Activated CD8-positive, alpha-beta T cell treated with anti-CD3 and anti-CD28 coated beads for 36 hours (primary cell): ENCODE measurements at regions of chr16 and their contacts with region 1.

Region 1: GRCh38 chr16:2752035-2752849 is at the start of gene SRRM2:
- DNase-seq: peak; percentile 97
- ATAC-seq: peak; percentile 90
- H3K4me3 Mint-ChIP-seq: peak within 1 kb of the TSS; percentile 99
- H3K27ac Mint-ChIP-seq: peak within 1 kb of the TSS; percentile 99
- H3K4me1 Mint-ChIP-seq: peaks cover 41% of the 10 kb centered on the region
- H3K27me3 Mint-ChIP-seq: no peaks in the 10 kb centered on the region
- CTCF ChIP-seq: no peak
- total RNA-seq, gene SRRM2: 518 to 561 TPM

Region 2: DNA sequence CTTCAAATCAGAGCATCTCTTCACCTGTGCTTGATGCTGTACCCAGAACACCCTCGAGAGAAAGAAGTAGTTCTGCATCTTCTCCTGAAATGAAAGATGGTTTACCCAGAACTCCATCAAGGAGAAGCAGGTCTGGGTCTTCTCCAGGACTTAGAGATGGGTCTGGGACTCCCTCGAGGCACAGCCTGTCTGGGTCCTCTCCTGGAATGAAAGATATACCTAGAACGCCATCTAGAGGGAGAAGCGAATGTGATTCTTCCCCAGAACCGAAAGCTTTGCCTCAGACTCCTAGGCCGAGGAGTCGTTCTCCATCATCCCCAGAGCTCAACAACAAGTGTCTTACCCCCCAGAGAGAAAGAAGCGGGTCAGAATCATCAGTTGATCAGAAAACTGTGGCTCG is 12.5 kb after region 1 on chr16:
- CTCF ChIA-PET with region 1: no interaction called
- POLR2A ChIA-PET with region 1: interaction called, 45 read pairs
- intact Hi-C with region 1: no loop called
- DNase-seq: no peak
- ATAC-seq: no peak
- H3K4me3 Mint-ChIP-seq: no peak overlapping the region
- H3K27ac Mint-ChIP-seq: no peak overlapping the region
- H3K4me1 Mint-ChIP-seq: peaks cover 5% of the 10 kb centered on the region
- H3K27me3 Mint-ChIP-seq: no peaks in the 10 kb centered on the region
- CTCF ChIP-seq: no peak

Region 3: GRCh38 chr16:2770057-2770951 is 18.1 kb after region 1 on chr16:
- CTCF ChIA-PET with region 1: no interaction called
- POLR2A ChIA-PET with region 1: interaction called, 80 read pairs
- intact Hi-C with region 1: no loop called
- DNase-seq: no peak
- ATAC-seq: peak; percentile 28
- H3K4me3 Mint-ChIP-seq: no peak overlapping the region
- H3K27ac Mint-ChIP-seq: no peak overlapping the region
- H3K4me1 Mint-ChIP-seq: peaks cover 8% of the 10 kb centered on the region
- H3K27me3 Mint-ChIP-seq: no peaks in the 10 kb centered on the region
- CTCF ChIP-seq: no peak

Region 4: DNA sequence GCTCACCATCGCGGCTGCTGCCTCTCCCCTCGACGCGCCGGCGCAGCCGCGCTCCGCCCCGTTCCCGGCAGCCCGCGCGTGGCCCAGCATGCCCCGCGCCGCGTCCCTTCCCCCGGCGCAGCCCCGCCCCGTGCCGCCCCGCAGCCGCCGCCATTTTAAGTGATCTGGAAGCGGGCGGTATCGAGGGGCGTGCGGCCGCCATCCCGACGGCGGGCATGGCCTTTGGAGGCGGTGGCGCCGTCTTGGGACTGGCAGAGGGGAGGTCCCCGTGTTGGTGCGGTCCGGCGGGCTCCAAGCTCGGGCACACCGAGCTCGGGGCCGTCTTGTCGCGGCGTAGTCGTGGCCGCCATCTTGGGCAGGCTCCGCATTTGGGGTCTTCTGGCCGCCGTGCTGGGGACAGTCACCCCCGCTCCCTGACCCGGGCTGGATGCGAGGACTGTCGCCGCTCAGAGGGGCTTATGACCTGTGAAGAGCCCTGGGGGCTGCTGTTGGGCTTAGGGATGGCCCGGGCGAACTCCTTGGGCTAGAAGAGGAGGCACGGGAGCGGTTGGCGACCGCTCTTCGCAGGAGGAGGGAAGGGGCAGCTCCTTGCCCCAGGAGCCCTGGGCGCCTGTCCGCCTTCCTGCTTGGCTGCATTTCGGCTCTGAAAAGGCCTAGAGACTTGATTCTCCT is 25.1 kb after region 1 on chr16 and contains the start of gene ELOB:
- CTCF ChIA-PET with region 1: no interaction called
- POLR2A ChIA-PET with region 1: interaction called, 80 read pairs
- intact Hi-C with region 1: no loop called
- DNase-seq: peak; percentile 92
- ATAC-seq: peak; percentile 93
- H3K4me3 Mint-ChIP-seq: peak within 1 kb of the TSS; percentile 90
- H3K27ac Mint-ChIP-seq: peak within 1 kb of the TSS; percentile 98
- H3K4me1 Mint-ChIP-seq: peaks cover 24% of the 10 kb centered on the region
- H3K27me3 Mint-ChIP-seq: no peaks in the 10 kb centered on the region
- CTCF ChIP-seq: no peak
- total RNA-seq, gene ELOB: 174 to 178 TPM

Region 5: GRCh38 chr16:2811703-2812471 is 59.6 kb after region 1 on chr16:
- CTCF ChIA-PET with region 1: no interaction called
- POLR2A ChIA-PET with region 1: no interaction called
- intact Hi-C with region 1: no loop called
- DNase-seq: no peak
- ATAC-seq: no peak
- H3K4me3 Mint-ChIP-seq: no peak overlapping the region
- H3K27ac Mint-ChIP-seq: no peak overlapping the region
- H3K4me1 Mint-ChIP-seq: no peaks in the 10 kb centered on the region
- H3K27me3 Mint-ChIP-seq: peaks cover 11% of the 10 kb centered on the region
- CTCF ChIP-seq: no peak